Panc1 (cell line): ENCODE measurements at regions of chr1 and their contacts with region 1.

Region 1: DNA sequence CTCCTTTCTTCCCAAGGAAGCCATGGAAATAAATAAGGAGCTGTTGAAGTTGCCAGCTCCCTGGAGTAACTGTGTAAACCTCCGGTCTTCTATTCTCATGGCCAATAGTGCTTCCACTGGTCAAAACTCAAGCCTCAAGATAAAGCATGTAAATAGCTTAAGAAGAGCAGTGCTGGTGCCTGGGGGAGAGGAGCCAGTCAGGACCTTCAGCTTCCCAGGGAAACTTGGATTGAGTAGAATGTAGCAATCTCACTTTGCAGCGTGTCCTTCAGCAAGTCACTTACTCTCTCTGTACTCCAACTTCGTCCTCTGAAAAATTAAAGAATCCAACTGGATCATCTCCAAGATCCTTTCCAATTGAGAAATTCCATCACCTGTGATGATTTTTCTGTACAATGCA is 44.7 kb downstream of the NAV1 start:
- DNase-seq: no peak
- ATAC-seq: no peak
- H3K4me3 ChIP-seq: no peak overlapping the region
- H3K27ac ChIP-seq: no peak overlapping the region
- H3K4me1 ChIP-seq: no peaks in the 10 kb centered on the region
- H3K27me3 ChIP-seq: no peaks in the 10 kb centered on the region
- CTCF ChIP-seq: no peak

Region 2: GRCh38 chr1:201358596-201358995 is 225.1 kb before region 1 on chr1:
- CTCF ChIA-PET with region 1: no interaction called
- POLR2A ChIA-PET with region 1: no interaction called
- in situ Hi-C with region 1: no loop called
- intact Hi-C with region 1: no loop called
- DNase-seq: no peak
- ATAC-seq: no peak
- H3K4me3 ChIP-seq: no peak overlapping the region
- H3K27ac ChIP-seq: no peak overlapping the region
- H3K4me1 ChIP-seq: no peaks in the 10 kb centered on the region
- H3K27me3 ChIP-seq: no peaks in the 10 kb centered on the region; the same call in 1 of the 2 replicates
- CTCF ChIP-seq: no peak

Region 3: DNA sequence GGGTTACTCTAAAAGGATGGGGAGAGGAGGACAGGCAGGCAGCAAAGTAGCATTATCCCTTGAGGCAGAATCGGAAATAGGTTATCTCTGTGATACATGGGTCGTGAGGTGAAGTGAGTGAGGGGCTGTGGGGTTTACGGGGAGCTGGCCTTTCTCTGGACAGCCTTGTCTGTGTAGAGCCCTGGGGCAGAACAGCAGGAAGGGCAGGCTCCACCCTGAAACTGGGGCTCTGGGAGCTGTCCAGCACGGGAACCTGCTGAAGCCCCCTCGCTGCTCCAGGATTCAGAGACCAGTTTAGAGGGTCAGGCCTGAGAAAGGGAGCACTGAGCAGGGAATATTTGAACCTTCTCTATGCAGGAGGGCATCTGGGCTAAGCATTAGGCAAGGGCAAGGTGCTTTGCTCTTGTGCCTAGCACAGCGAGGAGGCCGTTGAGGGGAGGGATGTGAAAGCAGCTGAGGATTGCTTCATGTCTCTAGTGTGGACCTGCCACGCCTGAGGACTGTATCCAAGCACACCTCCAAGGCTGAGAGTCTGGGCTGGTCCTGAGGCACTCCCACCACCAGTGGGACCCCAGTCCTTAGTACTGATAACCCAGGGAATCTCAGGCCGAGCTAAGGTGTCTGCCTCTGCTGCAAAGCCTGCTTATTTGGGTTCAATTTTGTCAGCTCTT is 11.0 kb after region 1 on chr1:
- CTCF ChIA-PET with region 1: no interaction called
- POLR2A ChIA-PET with region 1: no interaction called
- in situ Hi-C with region 1: no loop called
- intact Hi-C with region 1: no loop called
- DNase-seq: no peak
- ATAC-seq: no peak
- H3K4me3 ChIP-seq: no peak overlapping the region
- H3K27ac ChIP-seq: no peak overlapping the region
- H3K4me1 ChIP-seq: 0 out of 2 replicates have a peak, but pooled peaks cover 10% of the 10 kb centered on the region
- H3K27me3 ChIP-seq: no peaks in the 10 kb centered on the region
- CTCF ChIP-seq: no peak

Region 4: DNA sequence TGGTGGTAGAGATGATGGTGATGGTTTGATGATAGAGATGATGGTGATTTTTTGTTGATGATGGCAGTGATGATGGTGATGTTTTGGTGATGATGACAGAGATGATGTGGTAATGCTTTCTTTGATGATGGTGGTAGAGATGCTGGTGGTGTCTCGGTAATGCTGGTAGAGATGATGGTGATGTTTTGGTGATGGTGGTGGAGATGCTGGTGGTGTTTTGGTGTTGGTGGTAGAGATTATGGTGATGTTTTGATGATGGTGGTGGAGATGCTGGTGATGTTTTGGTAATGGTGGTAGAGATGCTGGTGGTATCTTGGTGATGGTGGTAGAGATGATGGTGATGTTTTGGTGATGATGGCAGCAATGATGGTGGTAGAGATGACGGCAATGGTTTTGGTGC is 86.9 kb after region 1 on chr1:
- CTCF ChIA-PET with region 1: no interaction called
- POLR2A ChIA-PET with region 1: interaction called, 13 read pairs
- in situ Hi-C with region 1: no loop called
- intact Hi-C with region 1: no loop called
- DNase-seq: no peak
- ATAC-seq: no peak
- H3K4me3 ChIP-seq: no peak overlapping the region
- H3K27ac ChIP-seq: no peak overlapping the region
- H3K4me1 ChIP-seq: no peaks in the 10 kb centered on the region
- H3K27me3 ChIP-seq: no peaks in the 10 kb centered on the region
- CTCF ChIP-seq: no peak